HepG2 (cell line): ENCODE measurements at regions of chr11 and their contacts with region 1.

Region 1: DNA sequence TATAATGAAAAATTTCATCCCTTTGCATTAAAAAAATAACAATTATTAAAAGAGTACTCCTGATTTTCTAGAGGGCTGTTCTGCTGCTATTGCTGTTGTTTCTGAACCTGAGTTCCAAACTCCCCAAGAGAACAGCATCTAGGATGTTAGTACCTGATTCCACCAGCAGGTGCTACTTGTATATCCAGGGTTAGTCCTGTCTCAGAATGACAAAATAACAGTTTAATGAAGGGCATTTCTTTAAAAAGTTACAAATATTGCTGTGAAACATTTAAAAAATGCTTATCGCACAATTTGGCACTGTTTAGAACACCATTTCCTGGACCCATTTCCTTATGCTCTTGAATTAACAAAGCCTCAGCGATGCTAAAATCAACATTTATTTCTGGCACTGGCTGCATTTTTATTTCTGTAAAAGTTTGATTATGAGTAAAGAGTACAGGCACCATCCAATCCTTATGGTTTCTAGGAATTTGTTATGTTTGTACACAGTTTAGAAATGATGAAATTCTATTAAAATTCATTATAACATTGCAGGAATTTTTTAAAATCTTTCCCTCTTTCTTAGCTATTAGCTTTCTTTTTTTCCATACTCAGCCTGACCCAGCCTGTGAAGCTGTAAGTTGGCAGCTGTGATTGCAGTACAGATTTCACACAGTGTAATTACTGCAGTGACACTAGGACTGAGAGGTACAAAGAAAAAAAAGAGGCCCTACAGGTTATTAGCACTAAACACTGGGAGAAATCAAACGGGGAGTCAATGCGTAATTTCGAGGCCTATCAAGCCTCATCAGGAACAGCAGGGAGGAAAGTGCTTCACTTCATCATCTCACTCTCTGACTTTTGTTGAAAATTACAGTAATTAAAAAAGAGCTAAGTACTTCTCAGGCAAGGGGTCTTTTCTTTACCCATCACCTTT is 208.8 kb downstream of the DCDC1 start:
- DNase-seq: peak; percentile 7
- ATAC-seq: peak; percentile 62
- H3K4me3 ChIP-seq: no peak overlapping the region
- H3K27ac ChIP-seq: no peak overlapping the region
- H3K4me1 ChIP-seq: peaks cover 5% of the 10 kb centered on the region; the same call in 1 of the 2 replicates
- H3K27me3 ChIP-seq: no peaks in the 10 kb centered on the region
- CTCF ChIP-seq: no peak
- EP300 ChIP-seq: no peak
- POLR2A ChIP-seq: no peak
- RAD21 ChIP-seq: no peak

Region 2: GRCh38 chr11:31114442-31114841 is 46.3 kb before region 1 on chr11:
- CTCF ChIA-PET with region 1: no interaction called
- POLR2A ChIA-PET with region 1: no interaction called
- in situ Hi-C with region 1: no loop called
- intact Hi-C with region 1: no loop called
- DNase-seq: no peak
- ATAC-seq: no peak
- H3K4me3 ChIP-seq: no peak overlapping the region
- H3K27ac ChIP-seq: no peak overlapping the region
- H3K4me1 ChIP-seq: no peaks in the 10 kb centered on the region
- H3K27me3 ChIP-seq: peaks cover 0 to 1% of the 10 kb centered on the region in 2 experiments; a peak in 1 of 5 replicates
- CTCF ChIP-seq: no peak
- EP300 ChIP-seq: no peak
- POLR2A ChIP-seq: no peak
- RAD21 ChIP-seq: no peak

Region 3: DNA sequence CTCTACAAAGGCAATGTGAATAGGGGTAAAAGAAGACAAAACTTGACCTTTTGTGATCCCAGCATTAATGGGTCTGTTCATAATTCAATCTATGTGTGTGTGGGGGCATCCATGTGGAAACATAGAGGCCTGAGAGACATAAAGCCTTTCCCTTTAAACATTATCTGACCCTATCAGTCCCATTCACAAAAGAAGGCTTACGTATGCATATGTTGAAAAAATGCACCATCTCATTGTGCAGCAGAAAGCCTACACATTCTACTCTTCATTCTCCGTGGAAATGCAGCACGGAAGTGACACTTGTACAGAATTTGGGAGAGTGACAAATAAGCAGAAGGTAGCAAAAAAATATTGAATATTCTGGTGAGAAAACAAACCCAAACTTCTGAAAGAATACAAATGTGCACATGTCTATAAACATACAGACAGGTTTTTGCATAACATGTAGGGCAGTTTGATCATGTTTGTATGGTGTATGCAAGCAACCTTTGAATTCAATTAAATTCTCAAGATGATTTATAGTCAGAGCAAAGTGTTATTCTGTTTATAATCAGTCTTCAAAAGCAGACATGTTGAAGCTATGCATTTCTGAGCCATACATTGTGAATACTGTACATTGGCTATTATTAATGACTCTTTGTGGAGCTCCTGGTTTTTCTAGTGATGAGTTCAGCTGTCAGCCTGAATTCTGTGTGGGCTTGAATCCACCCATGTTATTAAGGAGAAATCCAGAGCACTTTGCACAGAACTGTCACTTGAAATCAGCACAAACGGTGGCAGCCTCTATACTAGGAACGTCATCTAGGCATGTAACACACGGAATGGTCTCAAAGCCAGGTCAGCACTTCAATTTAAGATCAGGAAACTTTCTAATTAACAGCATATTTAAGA is 28.0 kb before region 1 on chr11:
- CTCF ChIA-PET with region 1: no interaction called
- POLR2A ChIA-PET with region 1: no interaction called
- in situ Hi-C with region 1: no loop called
- intact Hi-C with region 1: loop called (anchors 1 kb)
- DNase-seq: no peak
- ATAC-seq: no peak
- H3K4me3 ChIP-seq: no peak overlapping the region
- H3K27ac ChIP-seq: no peak overlapping the region
- H3K4me1 ChIP-seq: no peaks in the 10 kb centered on the region
- H3K27me3 ChIP-seq: no peaks in the 10 kb centered on the region
- CTCF ChIP-seq: no peak
- EP300 ChIP-seq: no peak
- POLR2A ChIP-seq: no peak
- RAD21 ChIP-seq: no peak

Region 4: GRCh38 chr11:31173926-31174680 is 13.3 kb after region 1 on chr11:
- CTCF ChIA-PET with region 1: no interaction called
- POLR2A ChIA-PET with region 1: no interaction called
- in situ Hi-C with region 1: no loop called
- intact Hi-C with region 1: no loop called
- DNase-seq: no peak
- ATAC-seq: no peak
- H3K4me3 ChIP-seq: no peak overlapping the region
- H3K27ac ChIP-seq: no peak overlapping the region
- H3K4me1 ChIP-seq: no peaks in the 10 kb centered on the region
- H3K27me3 ChIP-seq: no peaks in the 10 kb centered on the region
- CTCF ChIP-seq: no peak
- EP300 ChIP-seq: no peak
- POLR2A ChIP-seq: no peak
- RAD21 ChIP-seq: no peak